ENCODE measurements at regions of chr19 and their contacts with region 1.

Region 1: GRCh38 chr19:28009696-28010095 is 1203.3 kb downstream of the UQCRFS1 start:
- DNase-seq: no peak
- ATAC-seq: peak; percentile 58
- H3K4me3 ChIP-seq: no peak overlapping the region
- H3K27ac ChIP-seq: no peak overlapping the region
- H3K4me1 ChIP-seq: no peaks in the 10 kb centered on the region; the same call in 1 of the 2 replicates
- H3K27me3 ChIP-seq: no peaks in the 10 kb centered on the region
- CTCF ChIP-seq: no peak
- EP300 ChIP-seq: no peak
- POLR2A ChIP-seq: no peak
- RAD21 ChIP-seq: no peak

Region 2: GRCh38 chr19:27676877-27677276 is 332.8 kb before region 1 on chr19:
- CTCF ChIA-PET with region 1: no interaction called
- POLR2A ChIA-PET with region 1: no interaction called
- RAD21 ChIA-PET with region 1: no interaction called
- SMC1A ChIA-PET with region 1: no interaction called
- in situ Hi-C with region 1: no loop called
- intact Hi-C with region 1: no loop called
- DNase-seq: no peak
- ATAC-seq: no peak
- H3K4me3 ChIP-seq: no peak overlapping the region
- H3K27ac ChIP-seq: no peak overlapping the region
- H3K4me1 ChIP-seq: no peaks in the 10 kb centered on the region
- H3K27me3 ChIP-seq: no peaks in the 10 kb centered on the region
- CTCF ChIP-seq: no peak
- EP300 ChIP-seq: no peak
- POLR2A ChIP-seq: no peak
- RAD21 ChIP-seq: no peak

Region 3: GRCh38 chr19:27955485-27956480 is 53.9 kb before region 1 on chr19:
- CTCF ChIA-PET with region 1: no interaction called
- POLR2A ChIA-PET with region 1: no interaction called
- RAD21 ChIA-PET with region 1: no interaction called
- SMC1A ChIA-PET with region 1: no interaction called
- in situ Hi-C with region 1: no loop called
- intact Hi-C with region 1: no loop called
- DNase-seq: no peak
- ATAC-seq: no peak
- H3K4me3 ChIP-seq: no peak overlapping the region
- H3K27ac ChIP-seq: no peak overlapping the region
- H3K4me1 ChIP-seq: no peaks in the 10 kb centered on the region
- H3K27me3 ChIP-seq: no peaks in the 10 kb centered on the region; a peak in 1 of 4 replicates
- CTCF ChIP-seq: no peak
- EP300 ChIP-seq: no peak
- POLR2A ChIP-seq: no peak
- RAD21 ChIP-seq: no peak

Region 4: DNA sequence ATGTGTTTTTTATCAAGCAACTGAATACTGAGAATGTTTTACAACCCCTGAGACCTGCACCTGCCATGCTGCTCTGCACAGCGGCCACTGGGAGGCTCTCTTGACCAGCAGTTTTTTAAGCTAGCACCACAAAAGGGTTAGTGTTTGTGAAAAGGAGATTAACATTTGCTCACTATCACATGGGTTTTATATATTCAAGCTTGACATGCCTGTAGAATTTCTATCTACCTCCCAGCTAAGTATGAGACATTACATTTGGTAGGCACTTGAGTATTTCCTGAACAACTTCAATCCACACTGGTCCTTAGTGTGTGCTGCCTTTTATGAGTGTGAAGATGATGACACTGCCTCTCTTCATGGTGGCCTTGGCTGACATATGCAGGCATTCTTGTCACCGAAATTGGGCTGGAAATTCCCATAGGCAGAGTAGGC is 35.6 kb before region 1 on chr19:
- CTCF ChIA-PET with region 1: interaction called, 8 read pairs
- POLR2A ChIA-PET with region 1: no interaction called
- RAD21 ChIA-PET with region 1: interaction called, 11 read pairs
- SMC1A ChIA-PET with region 1: interaction called, 40 read pairs
- in situ Hi-C with region 1: no loop called
- intact Hi-C with region 1: no loop called
- DNase-seq: peak; percentile 25
- ATAC-seq: peak; percentile 77
- H3K4me3 ChIP-seq: no peak overlapping the region
- H3K27ac ChIP-seq: no peak overlapping the region
- H3K4me1 ChIP-seq: no peaks in the 10 kb centered on the region
- H3K27me3 ChIP-seq: no peaks in the 10 kb centered on the region
- CTCF ChIP-seq: peak; percentile 49 to 58 (median 49); a peak in 5 of 6 replicates
- EP300 ChIP-seq: no peak
- POLR2A ChIP-seq: no peak
- RAD21 ChIP-seq: peak; percentile 83

Region 5: GRCh38 chr19:27993619-27994570 is 15.8 kb before region 1 on chr19:
- CTCF ChIA-PET with region 1: interaction called, 15 read pairs
- POLR2A ChIA-PET with region 1: interaction called, 4 read pairs
- RAD21 ChIA-PET with region 1: interaction called, 11 read pairs
- SMC1A ChIA-PET with region 1: interaction called, 27 read pairs
- in situ Hi-C with region 1: no loop called
- intact Hi-C with region 1: no loop called
- DNase-seq: no peak
- ATAC-seq: peak; percentile 57
- H3K4me3 ChIP-seq: no peak overlapping the region
- H3K27ac ChIP-seq: peak overlapping the region; percentile 25
- H3K4me1 ChIP-seq: no peaks in the 10 kb centered on the region; the same call in 1 of the 2 replicates
- H3K27me3 ChIP-seq: no peaks in the 10 kb centered on the region
- CTCF ChIP-seq: no peak
- EP300 ChIP-seq: no peak
- POLR2A ChIP-seq: no peak
- RAD21 ChIP-seq: no peak

Region 6: GRCh38 chr19:28067882-28068281 is 58.2 kb after region 1 on chr19:
- CTCF ChIA-PET with region 1: interaction called, 12 read pairs
- POLR2A ChIA-PET with region 1: interaction called, 4 read pairs
- RAD21 ChIA-PET with region 1: interaction called, 41 read pairs
- SMC1A ChIA-PET with region 1: interaction called, 65 read pairs
- in situ Hi-C with region 1: no loop called
- intact Hi-C with region 1: loop called (anchors 10 kb)
- DNase-seq: peak; percentile 68
- ATAC-seq: peak; percentile 73
- H3K4me3 ChIP-seq: no peak overlapping the region
- H3K27ac ChIP-seq: peak overlapping the region; percentile 78
- H3K4me1 ChIP-seq: peaks cover 4% of the 10 kb centered on the region
- H3K27me3 ChIP-seq: no peaks in the 10 kb centered on the region
- CTCF ChIP-seq: no peak
- EP300 ChIP-seq: 0 out of 4 replicates have a peak, but pooled peaks of 1 of the 2 experiments have one; percentile 44
- POLR2A ChIP-seq: no peak
- RAD21 ChIP-seq: no peak

Region 7: GRCh38 chr19:28130066-28130511 is 120.4 kb after region 1 on chr19:
- CTCF ChIA-PET with region 1: interaction called, 14 read pairs
- POLR2A ChIA-PET with region 1: no interaction called
- RAD21 ChIA-PET with region 1: interaction called, 4 read pairs
- SMC1A ChIA-PET with region 1: interaction called, 5 read pairs
- in situ Hi-C with region 1: no loop called
- intact Hi-C with region 1: no loop called
- DNase-seq: peak; percentile 15
- ATAC-seq: peak; percentile 75
- H3K4me3 ChIP-seq: no peak overlapping the region
- H3K27ac ChIP-seq: no peak overlapping the region
- H3K4me1 ChIP-seq: no peaks in the 10 kb centered on the region
- H3K27me3 ChIP-seq: no peaks in the 10 kb centered on the region
- CTCF ChIP-seq: no peak
- EP300 ChIP-seq: no peak
- POLR2A ChIP-seq: no peak
- RAD21 ChIP-seq: no peak

Region 8: DNA sequence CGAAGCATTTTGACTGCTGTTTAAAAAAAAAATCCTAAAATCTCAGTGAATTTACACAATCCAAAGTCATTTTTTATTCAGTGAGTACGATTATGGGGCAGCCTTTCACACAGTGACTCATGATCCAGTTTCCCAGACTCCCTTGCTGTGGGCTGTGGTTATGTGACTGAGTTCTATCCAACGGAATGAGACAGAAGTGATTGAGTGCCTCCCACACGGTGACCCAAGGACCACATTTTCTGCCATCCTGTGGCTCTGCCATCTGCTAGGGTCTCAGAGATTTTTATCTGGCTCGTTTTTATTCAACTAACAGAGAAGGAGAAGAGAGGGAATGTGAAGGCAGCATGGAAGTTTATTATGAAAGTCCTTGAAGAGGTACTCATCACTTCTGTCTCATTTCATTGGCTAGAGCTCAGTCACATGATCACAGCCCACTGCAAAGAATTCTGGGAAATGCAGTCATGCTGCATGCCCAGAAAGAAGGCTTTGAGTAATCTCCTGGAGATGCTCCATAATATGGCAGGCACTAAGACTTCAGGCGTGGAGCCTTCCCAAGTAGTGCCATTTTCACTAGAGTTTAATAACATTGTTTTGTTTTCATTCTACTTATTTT is 203.9 kb after region 1 on chr19:
- CTCF ChIA-PET with region 1: interaction called, 28 read pairs
- POLR2A ChIA-PET with region 1: no interaction called
- RAD21 ChIA-PET with region 1: interaction called, 29 read pairs
- SMC1A ChIA-PET with region 1: interaction called, 32 read pairs
- in situ Hi-C with region 1: no loop called
- intact Hi-C with region 1: no loop called
- DNase-seq: no peak
- ATAC-seq: no peak
- H3K4me3 ChIP-seq: no peak overlapping the region
- H3K27ac ChIP-seq: no peak overlapping the region
- H3K4me1 ChIP-seq: no peaks in the 10 kb centered on the region
- H3K27me3 ChIP-seq: no peaks in the 10 kb centered on the region
- CTCF ChIP-seq: no peak
- EP300 ChIP-seq: no peak
- POLR2A ChIP-seq: no peak
- RAD21 ChIP-seq: no peak

Region 9: GRCh38 chr19:28234637-28235036 is 224.9 kb after region 1 on chr19:
- CTCF ChIA-PET with region 1: interaction called, 5 read pairs
- POLR2A ChIA-PET with region 1: no interaction called
- RAD21 ChIA-PET with region 1: interaction called, 8 read pairs
- SMC1A ChIA-PET with region 1: interaction called, 13 read pairs
- in situ Hi-C with region 1: no loop called
- intact Hi-C with region 1: no loop called
- DNase-seq: no peak
- ATAC-seq: no peak
- H3K4me3 ChIP-seq: no peak overlapping the region
- H3K27ac ChIP-seq: no peak overlapping the region
- H3K4me1 ChIP-seq: no peaks in the 10 kb centered on the region
- H3K27me3 ChIP-seq: no peaks in the 10 kb centered on the region
- CTCF ChIP-seq: no peak
- EP300 ChIP-seq: no peak
- POLR2A ChIP-seq: no peak
- RAD21 ChIP-seq: no peak

Measured in GM12878 (cell line).